Activated naive CD4-positive, alpha-beta T cell treated with anti-CD3 and anti-CD28 coated beads, Interleukin-2, amount 10 ng/mL, durations not matched to agents 7 days and 5 days (primary cell): ENCODE measurements at regions of chr5 and their contacts with region 1.

Region 1: GRCh38 chr5:65481635-65482295 is at the start of gene ADAMTS6:
- DNase-seq: peak; percentile 82
- H3K4me3 Mint-ChIP-seq: peak within 1 kb of the TSS; percentile 91
- H3K27ac Mint-ChIP-seq: peak within 1 kb of the TSS; percentile 86
- H3K4me1 Mint-ChIP-seq: peaks cover 19% of the 10 kb centered on the region
- H3K27me3 Mint-ChIP-seq: peaks cover 8% of the 10 kb centered on the region

Region 2: GRCh38 chr5:64811050-64811640 is 670.6 kb before region 1 on chr5:
- CTCF ChIA-PET with region 1: interaction called, 46 read pairs
- DNase-seq: no peak
- H3K4me3 Mint-ChIP-seq: no peak overlapping the region
- H3K27ac Mint-ChIP-seq: no peak overlapping the region
- H3K4me1 Mint-ChIP-seq: peaks cover 3% of the 10 kb centered on the region
- H3K27me3 Mint-ChIP-seq: no peaks in the 10 kb centered on the region

Region 3: GRCh38 chr5:64958757-64959391 is 522.9 kb before region 1 on chr5:
- CTCF ChIA-PET with region 1: interaction called, 13 read pairs
- DNase-seq: no peak
- H3K4me3 Mint-ChIP-seq: no peak overlapping the region
- H3K27ac Mint-ChIP-seq: no peak overlapping the region
- H3K4me1 Mint-ChIP-seq: no peaks in the 10 kb centered on the region
- H3K27me3 Mint-ChIP-seq: no peaks in the 10 kb centered on the region

Region 4: DNA sequence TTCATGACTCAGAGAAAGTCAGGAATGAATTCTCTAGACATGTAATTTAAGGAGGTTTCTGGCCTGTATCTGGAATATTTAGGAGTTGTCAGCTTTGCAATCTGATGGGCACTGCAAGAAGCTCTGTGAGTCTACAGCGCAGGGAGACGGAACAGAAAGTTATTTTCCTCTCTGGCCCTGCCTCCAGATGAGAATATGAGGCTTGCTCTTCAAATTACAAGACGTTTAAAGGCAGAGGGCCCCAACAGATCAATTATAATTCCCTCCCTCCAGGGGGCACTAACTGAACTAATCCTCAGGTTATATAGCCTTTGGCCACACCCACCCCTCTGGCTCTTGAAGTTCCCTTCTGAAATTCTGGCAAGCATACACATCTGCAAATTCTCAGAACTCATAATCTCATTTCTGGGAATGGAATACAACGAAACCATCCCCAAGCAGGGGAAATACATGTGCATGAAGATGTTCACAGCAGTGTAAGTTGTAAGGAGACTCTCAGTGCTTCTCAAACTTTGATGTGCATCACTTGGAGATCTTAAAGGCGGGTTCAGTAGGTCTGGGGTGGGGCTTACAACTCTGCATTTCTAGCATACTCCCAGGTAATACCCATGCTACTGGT is 405.4 kb before region 1 on chr5:
- CTCF ChIA-PET with region 1: interaction called, 10 read pairs
- DNase-seq: peak; percentile 79
- H3K4me3 Mint-ChIP-seq: no peak overlapping the region
- H3K27ac Mint-ChIP-seq: no peak overlapping the region
- H3K4me1 Mint-ChIP-seq: peaks cover 15% of the 10 kb centered on the region
- H3K27me3 Mint-ChIP-seq: peaks cover 4% of the 10 kb centered on the region

Region 5: GRCh38 chr5:65102828-65103711 is 378.7 kb before region 1 on chr5:
- CTCF ChIA-PET with region 1: interaction called, 41 read pairs
- DNase-seq: peak; percentile 52
- H3K4me3 Mint-ChIP-seq: peak overlapping the region; percentile 73
- H3K27ac Mint-ChIP-seq: no peak overlapping the region
- H3K4me1 Mint-ChIP-seq: peaks cover 41% of the 10 kb centered on the region
- H3K27me3 Mint-ChIP-seq: peaks cover 4% of the 10 kb centered on the region